ENCODE measurements at regions of chr12 and their contacts with region 1.

Region 1: DNA sequence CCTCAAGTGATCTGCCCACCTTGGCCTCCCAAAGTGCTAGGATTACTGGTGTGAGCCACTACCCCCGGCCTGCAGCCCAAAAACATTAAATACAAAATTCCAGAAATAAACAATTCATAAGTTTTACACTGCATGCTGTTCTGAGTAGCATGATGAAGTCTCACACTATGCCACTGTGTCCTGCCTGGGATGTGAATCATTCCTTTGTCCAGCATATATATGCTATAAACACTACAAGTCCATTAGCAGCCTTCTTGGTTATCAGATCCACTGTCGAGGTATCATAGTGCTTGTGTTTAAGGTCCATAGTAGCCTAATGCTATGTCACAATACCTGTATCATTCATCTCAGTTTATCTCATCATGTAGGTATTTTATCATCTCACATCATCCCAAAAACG is 15.9 kb downstream of the INTS13 start:
- H3K4me3 Mint-ChIP-seq: no peak overlapping the region
- H3K27ac Mint-ChIP-seq: no peak overlapping the region
- H3K4me1 Mint-ChIP-seq: no peaks in the 10 kb centered on the region
- H3K27me3 Mint-ChIP-seq: no peaks in the 10 kb centered on the region

Region 2: GRCh38 chr12:26906704-26907103 is 15.2 kb before region 1 on chr12:
- intact Hi-C with region 1: loop called (anchors 2 kb)
- H3K4me3 Mint-ChIP-seq: no peak overlapping the region
- H3K27ac Mint-ChIP-seq: no peak overlapping the region
- H3K4me1 Mint-ChIP-seq: no peaks in the 10 kb centered on the region
- H3K27me3 Mint-ChIP-seq: no peaks in the 10 kb centered on the region

Region 3: GRCh38 chr12:26971963-26972362 is 50.1 kb after region 1 on chr12:
- intact Hi-C with region 1: no loop called
- H3K4me3 Mint-ChIP-seq: no peak overlapping the region
- H3K27ac Mint-ChIP-seq: no peak overlapping the region
- H3K4me1 Mint-ChIP-seq: peaks cover 7% of the 10 kb centered on the region
- H3K27me3 Mint-ChIP-seq: no peaks in the 10 kb centered on the region

Measured in dendritic cell treated with granulocyte-macrophage colony-stimulating factor and Interleukin-4, amounts not matched to agents 40 ng/mL and 50 ng/mL, for 4 days (primary cell).